ENCODE measurements at regions of chr9 and their contacts with region 1.

Region 1: GRCh38 chr9:130707225-130707976 is 13.8 kb downstream of the EXOSC2 start:
- DNase-seq: no peak
- H3K4me3 ChIP-seq: no peak overlapping the region
- CTCF ChIP-seq: peak; percentile 46

Region 2: GRCh38 chr9:130298663-130299279 is 408.6 kb before region 1 on chr9:
- CTCF ChIA-PET with region 1: no interaction called
- POLR2A ChIA-PET with region 1: no interaction called
- DNase-seq: no peak
- H3K4me3 ChIP-seq: no peak overlapping the region
- CTCF ChIP-seq: no peak

Region 3: DNA sequence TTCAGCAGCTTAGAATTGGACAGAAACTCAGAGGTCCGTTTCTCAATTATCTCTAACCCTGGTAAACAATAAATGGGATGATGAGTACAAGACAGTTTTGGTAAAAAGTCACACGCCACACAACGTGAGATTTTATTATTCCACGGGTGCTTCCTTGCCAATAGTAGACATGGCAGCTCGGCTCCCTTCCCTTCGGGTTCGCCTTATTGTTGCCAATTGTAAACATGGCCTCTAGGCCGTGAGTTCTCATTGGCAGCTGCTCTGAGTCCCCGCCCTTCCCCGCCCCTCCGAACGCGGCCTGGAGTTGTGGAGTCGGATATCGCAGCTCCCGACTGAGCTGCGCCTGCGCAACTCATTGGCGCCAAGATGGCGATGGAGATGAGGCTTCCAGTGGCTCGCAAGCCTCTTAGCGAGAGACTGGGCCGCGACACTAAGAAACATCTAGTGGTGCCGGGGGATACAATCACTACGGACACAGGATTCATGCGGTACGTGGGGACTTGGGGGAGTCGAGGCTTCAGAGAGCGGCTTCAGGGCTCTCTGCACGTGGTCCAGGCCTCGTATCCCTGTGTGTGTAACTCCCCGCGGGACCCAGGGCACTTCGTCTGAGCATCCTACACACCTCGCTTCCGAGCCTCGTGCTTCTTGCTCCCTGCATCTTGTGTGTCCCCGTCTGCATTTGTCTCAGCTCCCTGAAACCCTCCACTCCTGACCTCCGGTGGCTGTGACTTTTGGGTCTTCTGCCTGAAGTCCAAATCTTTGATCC is 13.8 kb before region 1 on chr9 and contains the start of gene EXOSC2:
- CTCF ChIA-PET with region 1: interaction called, 58 read pairs
- POLR2A ChIA-PET with region 1: no interaction called
- DNase-seq: peak; percentile 88
- H3K4me3 ChIP-seq: peak within 1 kb of the TSS; percentile 86
- CTCF ChIP-seq: no peak

Region 4: GRCh38 chr9:130860458-130861316 is 153.3 kb after region 1 on chr9:
- CTCF ChIA-PET with region 1: interaction called, 786 read pairs
- POLR2A ChIA-PET with region 1: interaction called, 3 read pairs
- DNase-seq: peak; percentile 95
- H3K4me3 ChIP-seq: no peak overlapping the region; the same call in 1 of the 2 replicates
- CTCF ChIP-seq: peak; percentile 54

Region 5: GRCh38 chr9:130936298-130937117 is 229.1 kb after region 1 on chr9:
- CTCF ChIA-PET with region 1: interaction called, 21 read pairs
- POLR2A ChIA-PET with region 1: no interaction called
- DNase-seq: peak; percentile 34
- H3K4me3 ChIP-seq: no peak overlapping the region
- CTCF ChIP-seq: no peak

Region 6: GRCh38 chr9:130973169-130973936 is 266.0 kb after region 1 on chr9:
- CTCF ChIA-PET with region 1: no interaction called
- POLR2A ChIA-PET with region 1: no interaction called
- DNase-seq: no peak
- H3K4me3 ChIP-seq: no peak overlapping the region
- CTCF ChIP-seq: no peak

Measured in AG04449 (cell line).